B cell (primary cell): ENCODE measurements at regions of chr10 and their contacts with region 1.

Region 1: GRCh38 chr10:121900443-121901174 is 27.2 kb downstream of the ATE1 start:
- DNase-seq: peak; percentile 52
- ATAC-seq: peak; percentile 51
- H3K4me3 ChIP-seq: no peak overlapping the region
- H3K4me3 Mint-ChIP-seq: no peak overlapping the region
- H3K27ac ChIP-seq: no peak overlapping the region
- H3K27ac Mint-ChIP-seq: no peak overlapping the region
- H3K4me1 ChIP-seq: no peaks in the 10 kb centered on the region
- H3K4me1 Mint-ChIP-seq: no peaks in the 10 kb centered on the region
- H3K27me3 ChIP-seq: no peaks in the 10 kb centered on the region
- H3K27me3 Mint-ChIP-seq: no peaks in the 10 kb centered on the region
- CTCF ChIP-seq: peak; percentile 78

Region 2: GRCh38 chr10:120942806-120943413 is 957.7 kb before region 1 on chr10:
- CTCF ChIA-PET with region 1: interaction called, 3 read pairs
- POLR2A ChIA-PET with region 1: no interaction called
- intact Hi-C with region 1: loop called (anchors 2 kb)
- DNase-seq: peak; percentile 74
- ATAC-seq: peak; percentile 84
- H3K4me3 ChIP-seq: no peak overlapping the region
- H3K4me3 Mint-ChIP-seq: no peak overlapping the region
- H3K27ac ChIP-seq: no peak overlapping the region
- H3K27ac Mint-ChIP-seq: no peak overlapping the region
- H3K4me1 ChIP-seq: peaks cover 0 to 8% of the 10 kb centered on the region in 2 donors
- H3K4me1 Mint-ChIP-seq: peaks cover 6% of the 10 kb centered on the region
- H3K27me3 ChIP-seq: peaks cover 0 to 11% (median 0%) of the 10 kb centered on the region in 4 experiments
- H3K27me3 Mint-ChIP-seq: peaks cover 18% of the 10 kb centered on the region
- CTCF ChIP-seq: peak; percentile 84

Region 3: GRCh38 chr10:121886997-121887622 is 13.5 kb before region 1 on chr10:
- CTCF ChIA-PET with region 1: interaction called, 24 read pairs
- POLR2A ChIA-PET with region 1: no interaction called
- intact Hi-C with region 1: no loop called
- DNase-seq: peak; percentile 32
- ATAC-seq: no peak
- H3K4me3 ChIP-seq: no peak overlapping the region
- H3K4me3 Mint-ChIP-seq: no peak overlapping the region
- H3K27ac ChIP-seq: no peak overlapping the region
- H3K27ac Mint-ChIP-seq: no peak overlapping the region
- H3K4me1 ChIP-seq: no peaks in the 10 kb centered on the region
- H3K4me1 Mint-ChIP-seq: no peaks in the 10 kb centered on the region
- H3K27me3 ChIP-seq: no peaks in the 10 kb centered on the region
- H3K27me3 Mint-ChIP-seq: no peaks in the 10 kb centered on the region
- CTCF ChIP-seq: peak; percentile 64

Region 4: DNA sequence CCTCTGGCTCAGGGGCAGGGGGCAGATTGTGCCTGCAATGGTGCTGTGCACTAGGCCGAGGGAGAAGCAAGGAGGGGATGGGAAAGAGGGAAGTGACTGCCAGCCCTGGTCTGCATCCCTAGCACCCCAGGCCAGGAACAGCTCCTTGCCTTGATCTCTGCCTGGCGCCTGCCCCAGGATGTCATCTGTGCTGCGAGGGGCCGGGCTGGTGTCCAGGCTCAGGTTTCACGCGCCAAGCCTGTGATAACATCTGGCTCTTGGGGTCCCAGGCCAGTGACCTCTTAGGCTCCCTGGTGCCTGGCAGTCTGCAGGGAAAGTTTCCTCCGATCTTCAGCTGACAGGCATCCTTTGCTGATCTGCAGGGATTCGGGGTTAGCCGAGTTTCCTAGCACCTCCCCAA is 1572.0 kb after region 1 on chr10:
- CTCF ChIA-PET with region 1: no interaction called
- POLR2A ChIA-PET with region 1: no interaction called
- intact Hi-C with region 1: no loop called
- DNase-seq: no peak
- ATAC-seq: no peak
- H3K4me3 ChIP-seq: no peak overlapping the region
- H3K4me3 Mint-ChIP-seq: no peak overlapping the region
- H3K27ac ChIP-seq: no peak overlapping the region
- H3K27ac Mint-ChIP-seq: no peak overlapping the region
- H3K4me1 ChIP-seq: no peaks in the 10 kb centered on the region
- H3K4me1 Mint-ChIP-seq: no peaks in the 10 kb centered on the region
- H3K27me3 ChIP-seq: no peaks in the 10 kb centered on the region
- H3K27me3 Mint-ChIP-seq: peaks cover 8% of the 10 kb centered on the region
- CTCF ChIP-seq: no peak